ENCODE measurements at regions of chr11 and their contacts with region 1.

Region 1: GRCh38 chr11:62753736-62754603 is at the start of gene ZBTB3:
- DNase-seq: peak; percentile 98
- ATAC-seq: peak; percentile 98
- H3K4me3 Mint-ChIP-seq: peak within 1 kb of the TSS; percentile 96
- H3K27ac Mint-ChIP-seq: peak within 1 kb of the TSS; percentile 97
- H3K4me1 Mint-ChIP-seq: peaks cover 26% of the 10 kb centered on the region
- H3K27me3 Mint-ChIP-seq: no peaks in the 10 kb centered on the region
- total RNA-seq, gene ZBTB3: 6.0 to 10.2 TPM

Region 2: DNA sequence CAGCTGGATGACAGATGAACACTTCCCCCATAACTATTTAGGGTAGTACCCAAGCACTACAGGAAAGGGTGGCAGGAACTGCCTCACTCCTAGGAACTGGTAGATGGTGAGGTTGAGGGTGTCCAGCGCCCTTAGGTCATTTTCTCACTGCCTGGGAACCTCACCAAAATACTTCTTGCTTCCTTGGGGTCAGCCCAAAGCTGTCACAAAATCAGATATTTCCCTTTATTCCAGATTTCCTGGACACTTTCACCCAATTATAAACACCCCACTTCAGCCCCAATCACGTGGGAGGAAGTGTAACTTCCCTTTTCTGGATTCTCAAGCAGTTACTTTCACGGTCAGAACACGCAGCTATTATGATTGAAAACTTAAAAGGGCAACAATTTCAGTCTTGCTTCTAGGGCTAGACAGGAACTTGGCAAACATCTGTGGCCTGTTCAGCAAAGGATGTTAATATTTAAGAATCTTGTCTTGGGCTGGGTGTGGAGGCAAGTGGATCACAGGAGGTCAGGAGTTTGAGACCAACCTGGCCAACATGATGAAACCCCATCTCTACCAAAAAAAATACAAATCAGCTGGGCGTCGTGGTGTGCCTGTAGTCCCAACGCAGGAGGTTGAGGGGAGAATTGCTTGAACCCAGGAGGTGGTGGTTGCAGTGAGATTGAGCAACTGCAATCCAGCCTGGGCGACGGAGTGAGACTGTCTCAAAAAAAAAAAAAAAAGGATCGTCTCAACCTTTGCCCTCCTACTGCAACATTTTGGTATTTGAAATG is 790.5 kb before region 1 on chr11:
- CTCF ChIA-PET with region 1: no interaction called
- POLR2A ChIA-PET with region 1: no interaction called
- intact Hi-C with region 1: no loop called
- DNase-seq: no peak
- ATAC-seq: no peak
- H3K4me3 Mint-ChIP-seq: peak overlapping the region; percentile 16
- H3K27ac Mint-ChIP-seq: peak overlapping the region; percentile 71
- H3K4me1 Mint-ChIP-seq: peaks cover 29% of the 10 kb centered on the region
- H3K27me3 Mint-ChIP-seq: no peaks in the 10 kb centered on the region

Region 3: GRCh38 chr11:62306227-62306626 is 447.7 kb before region 1 on chr11:
- CTCF ChIA-PET with region 1: no interaction called
- POLR2A ChIA-PET with region 1: no interaction called
- intact Hi-C with region 1: no loop called
- DNase-seq: no peak
- ATAC-seq: no peak
- H3K4me3 Mint-ChIP-seq: no peak overlapping the region
- H3K27ac Mint-ChIP-seq: no peak overlapping the region
- H3K4me1 Mint-ChIP-seq: peaks cover 3% of the 10 kb centered on the region
- H3K27me3 Mint-ChIP-seq: peaks cover 15% of the 10 kb centered on the region

Region 4: GRCh38 chr11:62479631-62480201 is 274.3 kb before region 1 on chr11:
- CTCF ChIA-PET with region 1: no interaction called
- POLR2A ChIA-PET with region 1: no interaction called
- intact Hi-C with region 1: no loop called
- DNase-seq: no peak
- ATAC-seq: no peak
- H3K4me3 Mint-ChIP-seq: no peak overlapping the region
- H3K27ac Mint-ChIP-seq: no peak overlapping the region
- H3K4me1 Mint-ChIP-seq: no peaks in the 10 kb centered on the region
- H3K27me3 Mint-ChIP-seq: no peaks in the 10 kb centered on the region

Region 5: GRCh38 chr11:62652161-62653006 is 101.6 kb before region 1 on chr11:
- CTCF ChIA-PET with region 1: no interaction called
- POLR2A ChIA-PET with region 1: interaction called, 8 read pairs
- intact Hi-C with region 1: loop called in 1 of 2 experiments (anchors 2 kb)
- DNase-seq: no peak
- ATAC-seq: no peak
- H3K4me3 Mint-ChIP-seq: peak overlapping the region; percentile 88
- H3K27ac Mint-ChIP-seq: peak overlapping the region; percentile 91
- H3K4me1 Mint-ChIP-seq: peaks cover 23% of the 10 kb centered on the region
- H3K27me3 Mint-ChIP-seq: no peaks in the 10 kb centered on the region

Region 6: GRCh38 chr11:62771144-62772021 is 17.4 kb after region 1 on chr11 and contains the start of gene TAF6L:
- CTCF ChIA-PET with region 1: interaction called, 8 read pairs
- POLR2A ChIA-PET with region 1: interaction called, 9 read pairs
- intact Hi-C with region 1: loop called (anchors 1 kb)
- DNase-seq: peak; percentile 98
- ATAC-seq: peak; percentile 87
- H3K4me3 Mint-ChIP-seq: peak within 1 kb of the TSS; percentile 85
- H3K27ac Mint-ChIP-seq: peak within 1 kb of the TSS; percentile 89
- H3K4me1 Mint-ChIP-seq: peaks cover 26% of the 10 kb centered on the region
- H3K27me3 Mint-ChIP-seq: no peaks in the 10 kb centered on the region
- total RNA-seq, gene TAF6L: 10.2 to 12.6 TPM

Region 7: GRCh38 chr11:62787005-62787759 is 33.2 kb after region 1 on chr11 and contains the start of gene TMEM179B:
- CTCF ChIA-PET with region 1: interaction called, 29 read pairs
- POLR2A ChIA-PET with region 1: interaction called, 11 read pairs
- intact Hi-C with region 1: loop called (anchors 1 to 5 kb)
- DNase-seq: peak; percentile 99
- ATAC-seq: peak; percentile 63
- H3K4me3 Mint-ChIP-seq: peak within 1 kb of the TSS; percentile 90
- H3K27ac Mint-ChIP-seq: peak within 1 kb of the TSS; percentile 95
- H3K4me1 Mint-ChIP-seq: peaks cover 42% of the 10 kb centered on the region
- H3K27me3 Mint-ChIP-seq: no peaks in the 10 kb centered on the region
- total RNA-seq, gene TMEM179B: 19.5 to 35.9 TPM

Region 8: DNA sequence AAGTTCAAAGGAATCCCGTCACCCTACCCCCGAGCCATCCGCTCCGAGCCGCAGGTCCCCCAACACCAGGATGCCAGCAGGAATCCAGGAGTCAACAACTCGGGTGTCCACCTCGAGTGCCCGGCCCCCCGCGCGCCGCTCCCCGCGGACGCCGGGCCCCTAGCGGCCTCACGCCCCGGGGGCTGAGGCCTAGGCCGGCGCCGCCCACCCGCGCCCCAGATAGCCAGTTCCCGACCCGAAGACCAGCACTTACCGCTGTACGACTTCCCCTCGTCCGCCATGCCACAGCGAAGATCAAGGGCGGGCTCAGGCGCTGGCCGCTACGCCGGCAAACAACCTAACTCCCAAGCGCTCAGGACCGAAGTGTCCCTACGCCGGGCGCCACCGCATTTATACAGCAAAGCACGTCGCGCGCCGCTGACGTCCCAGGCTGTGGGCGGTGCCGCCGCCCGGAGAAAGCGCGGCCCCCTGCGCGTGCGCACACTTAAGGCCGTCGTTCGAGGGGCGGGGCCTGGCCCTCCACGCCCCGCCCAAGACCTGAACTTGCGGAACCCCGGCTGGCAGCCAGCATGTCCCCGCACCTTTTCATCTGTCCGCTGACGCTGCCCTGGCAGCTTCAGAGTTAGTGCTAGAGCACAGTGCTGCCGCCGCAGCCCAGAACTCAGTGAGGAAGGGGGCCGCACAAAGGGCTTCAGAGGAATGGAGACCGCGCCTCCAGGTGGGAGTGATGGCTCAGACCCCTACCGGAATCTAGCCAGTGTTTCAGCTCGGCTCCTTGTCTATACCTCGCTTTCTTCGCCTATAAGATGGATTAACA is 51.3 kb after region 1 on chr11 and contains the start of gene NXF1:
- CTCF ChIA-PET with region 1: no interaction called
- POLR2A ChIA-PET with region 1: interaction called, 10 read pairs
- intact Hi-C with region 1: loop called in 1 of 2 experiments (anchors 1 kb)
- DNase-seq: peak; percentile 97
- ATAC-seq: peak; percentile 79
- H3K4me3 Mint-ChIP-seq: peak within 1 kb of the TSS; percentile 99
- H3K27ac Mint-ChIP-seq: peak within 1 kb of the TSS; percentile 97
- H3K4me1 Mint-ChIP-seq: peaks cover 29% of the 10 kb centered on the region
- H3K27me3 Mint-ChIP-seq: no peaks in the 10 kb centered on the region
- total RNA-seq, gene NXF1: 89.5 to 97.6 TPM

Region 9: DNA sequence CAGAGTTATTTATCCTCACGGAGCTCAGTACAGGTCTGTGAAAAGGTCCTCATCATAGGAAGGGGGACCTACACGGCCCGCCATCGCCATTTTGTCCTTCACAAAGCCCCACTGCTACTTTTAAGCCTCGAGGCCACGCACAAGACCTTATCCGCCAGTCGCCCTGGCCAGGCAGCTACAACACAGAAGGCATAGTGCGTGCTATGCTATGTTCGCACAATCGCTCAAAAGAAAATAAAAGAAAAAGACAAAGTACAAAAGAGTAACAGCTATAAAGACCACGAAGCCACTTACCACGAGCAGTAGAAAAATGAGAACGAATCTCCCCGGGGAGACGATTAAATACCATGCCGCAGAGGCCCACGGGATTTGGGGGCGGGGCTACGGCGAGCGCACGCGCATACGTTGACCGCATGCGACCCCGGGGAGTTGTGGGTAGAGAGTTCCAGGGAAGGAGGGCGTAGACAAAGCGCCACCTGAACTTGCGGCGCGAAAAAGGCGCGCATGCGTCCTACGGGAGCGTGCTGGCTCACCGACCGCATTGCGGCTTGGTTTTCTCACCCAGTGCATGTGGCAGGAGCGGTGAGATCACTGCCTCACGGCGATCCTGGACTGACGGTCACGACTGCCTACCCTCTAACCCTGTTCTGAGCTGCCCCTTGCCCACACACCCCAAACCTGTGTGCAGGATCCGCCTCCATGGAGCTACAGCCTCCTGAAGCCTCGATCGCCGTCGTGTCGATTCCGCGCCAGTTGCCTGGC is 101.8 kb after region 1 on chr11:
- CTCF ChIA-PET with region 1: no interaction called
- POLR2A ChIA-PET with region 1: interaction called, 17 read pairs
- intact Hi-C with region 1: loop called in 1 of 2 experiments (anchors 1 kb)
- DNase-seq: peak; percentile 99
- ATAC-seq: peak; percentile 83
- H3K4me3 Mint-ChIP-seq: peak overlapping the region; percentile 99
- H3K27ac Mint-ChIP-seq: peak overlapping the region; percentile 97
- H3K4me1 Mint-ChIP-seq: peaks cover 53% of the 10 kb centered on the region
- H3K27me3 Mint-ChIP-seq: no peaks in the 10 kb centered on the region

Region 10: DNA sequence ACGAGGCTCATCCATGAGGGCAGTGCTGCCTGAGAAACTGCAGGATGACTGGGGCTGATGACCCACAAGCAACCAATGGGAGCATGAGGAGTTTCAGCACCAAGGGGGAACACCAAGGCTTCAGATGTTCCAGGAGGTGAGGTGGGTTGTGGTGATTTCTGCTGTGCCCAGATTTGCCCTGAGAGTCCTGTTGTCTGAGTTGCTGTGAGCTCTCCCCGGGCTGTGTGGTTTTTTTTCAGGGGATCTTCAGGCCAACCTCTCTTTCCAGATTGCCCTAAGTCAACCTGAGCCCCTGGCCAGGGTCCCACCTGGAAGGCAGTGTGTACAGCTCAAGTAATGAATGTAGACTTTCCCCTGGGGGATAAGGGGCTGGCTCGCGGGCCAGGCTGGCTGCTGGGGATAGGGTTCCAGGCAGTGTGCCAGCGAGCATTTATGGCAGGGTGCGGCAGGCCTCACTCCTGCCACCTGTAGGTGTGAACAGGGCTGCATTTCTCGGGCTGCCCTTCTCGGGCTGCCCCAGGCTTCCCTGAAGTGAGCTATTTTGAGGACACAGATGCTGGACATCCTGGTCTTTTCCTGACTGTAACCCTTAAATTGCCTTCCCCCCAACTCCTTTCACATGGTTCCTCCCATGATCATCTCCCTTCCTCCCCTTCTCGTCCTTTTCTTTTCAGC is 221.0 kb after region 1 on chr11:
- CTCF ChIA-PET with region 1: no interaction called
- POLR2A ChIA-PET with region 1: no interaction called
- intact Hi-C with region 1: no loop called
- DNase-seq: peak; percentile 59
- ATAC-seq: peak; percentile 73
- H3K4me3 Mint-ChIP-seq: no peak overlapping the region
- H3K27ac Mint-ChIP-seq: no peak overlapping the region
- H3K4me1 Mint-ChIP-seq: no peaks in the 10 kb centered on the region
- H3K27me3 Mint-ChIP-seq: peaks cover 5% of the 10 kb centered on the region